CD4-positive, alpha-beta T cell (primary cell): ENCODE measurements at regions of chr22 and their contacts with region 1.

Region 1: GRCh38 chr22:40044102-40044869 is 49.5 kb downstream of the FAM83F start:
- DNase-seq: peak; percentile 96 to 100 (median 98)
- ATAC-seq: peak; percentile 86
- H3K4me3 ChIP-seq: peak overlapping the region; percentile 67
- H3K4me3 Mint-ChIP-seq: peak overlapping the region; percentile 97
- H3K27ac ChIP-seq: peak overlapping the region; percentile 97 to 100
- H3K27ac Mint-ChIP-seq: peak overlapping the region; percentile 98
- H3K4me1 ChIP-seq: peaks cover 43% of the 10 kb centered on the region
- H3K4me1 Mint-ChIP-seq: peaks cover 45% of the 10 kb centered on the region
- H3K27me3 ChIP-seq: peaks cover 0 to 4% of the 10 kb centered on the region in 2 experiments
- H3K27me3 Mint-ChIP-seq: peaks cover 7% of the 10 kb centered on the region
- CTCF ChIP-seq: no peak

Region 2: DNA sequence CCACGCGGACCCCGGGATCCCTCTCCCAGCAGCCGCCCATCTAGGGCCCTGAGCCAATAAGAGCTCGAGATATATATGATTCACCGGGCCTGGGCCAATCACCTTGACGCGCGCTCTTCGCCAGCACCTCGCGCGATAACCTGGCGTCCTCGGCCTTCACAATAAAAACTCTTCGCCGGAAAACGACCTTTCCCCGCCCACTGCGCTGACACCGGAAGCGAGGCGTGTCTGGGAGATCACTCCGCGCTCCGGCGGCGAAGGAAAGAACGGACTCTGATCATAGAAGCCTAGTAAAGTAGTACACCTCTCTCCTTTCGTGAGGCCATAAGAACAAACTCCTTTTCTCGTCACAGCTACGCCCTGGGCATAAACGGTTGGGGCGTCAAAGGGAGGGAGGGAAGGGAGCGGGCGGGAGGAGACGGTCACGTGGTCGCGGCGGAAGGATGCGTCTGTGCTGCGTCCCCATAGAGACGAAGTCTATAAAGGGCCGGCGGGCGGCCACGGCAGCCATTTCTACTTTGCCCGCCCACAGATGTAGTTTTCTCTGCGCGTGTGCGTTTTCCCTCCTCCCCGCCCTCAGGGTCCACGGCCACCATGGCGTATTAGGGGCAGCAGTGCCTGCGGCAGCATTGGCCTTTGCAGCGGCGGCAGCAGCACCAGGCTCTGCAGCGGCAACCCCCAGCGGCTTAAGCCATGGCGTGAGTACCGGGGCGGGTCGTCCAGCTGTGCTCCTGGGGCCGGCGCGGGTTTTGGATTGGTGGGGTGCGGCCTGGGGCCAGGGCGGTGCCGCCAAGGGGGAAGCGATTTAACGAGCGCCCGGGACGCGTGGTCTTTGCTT is 524.0 kb before region 1 on chr22 and contains the start of gene ATF4:
- CTCF ChIA-PET with region 1: no interaction called
- POLR2A ChIA-PET with region 1: interaction called, 36 read pairs
- intact Hi-C with region 1: no loop called
- DNase-seq: peak; percentile 93 to 99 (median 94)
- ATAC-seq: peak; percentile 91
- H3K4me3 ChIP-seq: peak within 1 kb of the TSS; percentile 100
- H3K4me3 Mint-ChIP-seq: peak within 1 kb of the TSS; percentile 97
- H3K27ac ChIP-seq: peak within 1 kb of the TSS; percentile 92 to 95
- H3K27ac Mint-ChIP-seq: peak within 1 kb of the TSS; percentile 98
- H3K4me1 ChIP-seq: peaks cover 52% of the 10 kb centered on the region
- H3K4me1 Mint-ChIP-seq: peaks cover 57% of the 10 kb centered on the region
- H3K27me3 ChIP-seq: no peaks in the 10 kb centered on the region
- H3K27me3 Mint-ChIP-seq: peaks cover 5% of the 10 kb centered on the region
- CTCF ChIP-seq: no peak
- total RNA-seq, gene ATF4: 358 to 365 TPM

Region 3: DNA sequence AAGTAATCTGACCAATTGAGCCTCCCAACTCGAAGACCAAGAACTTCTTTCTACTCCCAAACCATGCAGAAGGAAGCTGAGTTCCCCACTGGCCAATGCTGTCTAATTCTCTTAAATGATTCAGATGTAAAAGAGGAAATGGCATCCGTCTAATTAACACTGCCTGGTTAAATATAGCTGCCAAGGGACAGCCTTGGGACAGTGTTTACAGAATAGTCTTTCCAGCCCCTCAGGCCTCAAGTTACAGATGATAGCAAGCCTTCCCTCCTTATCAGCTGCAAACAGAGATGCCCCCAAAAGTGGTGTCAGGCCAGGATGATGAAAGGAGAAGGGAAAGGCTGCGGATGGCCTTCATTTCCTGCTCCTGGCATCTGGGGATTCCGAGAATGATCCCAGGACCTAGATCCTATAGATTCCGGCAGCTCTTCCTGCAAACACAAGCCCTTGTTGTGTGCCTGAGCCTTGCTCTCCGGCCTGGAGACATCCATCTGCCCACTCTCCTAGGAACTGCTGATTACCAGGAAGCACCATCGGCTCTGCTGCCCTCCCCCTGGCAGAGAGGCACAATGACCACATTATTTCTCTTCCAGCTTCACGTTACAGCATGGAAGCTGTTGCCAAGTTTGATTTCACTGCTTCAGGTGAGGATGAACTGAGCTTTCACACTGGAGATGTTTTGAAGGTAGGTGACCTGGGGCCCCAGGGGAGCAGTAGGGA is 97.6 kb before region 1 on chr22:
- CTCF ChIA-PET with region 1: no interaction called
- POLR2A ChIA-PET with region 1: interaction called, 12 read pairs
- intact Hi-C with region 1: no loop called
- DNase-seq: no peak
- ATAC-seq: no peak
- H3K4me3 ChIP-seq: no peak overlapping the region
- H3K4me3 Mint-ChIP-seq: peak overlapping the region; percentile 69
- H3K27ac ChIP-seq: peak overlapping the region; percentile 26 to 37
- H3K27ac Mint-ChIP-seq: no peak overlapping the region
- H3K4me1 ChIP-seq: peaks cover 94% of the 10 kb centered on the region
- H3K4me1 Mint-ChIP-seq: peaks cover 99% of the 10 kb centered on the region
- H3K27me3 ChIP-seq: no peaks in the 10 kb centered on the region
- H3K27me3 Mint-ChIP-seq: no peaks in the 10 kb centered on the region
- CTCF ChIP-seq: no peak

Region 4: DNA sequence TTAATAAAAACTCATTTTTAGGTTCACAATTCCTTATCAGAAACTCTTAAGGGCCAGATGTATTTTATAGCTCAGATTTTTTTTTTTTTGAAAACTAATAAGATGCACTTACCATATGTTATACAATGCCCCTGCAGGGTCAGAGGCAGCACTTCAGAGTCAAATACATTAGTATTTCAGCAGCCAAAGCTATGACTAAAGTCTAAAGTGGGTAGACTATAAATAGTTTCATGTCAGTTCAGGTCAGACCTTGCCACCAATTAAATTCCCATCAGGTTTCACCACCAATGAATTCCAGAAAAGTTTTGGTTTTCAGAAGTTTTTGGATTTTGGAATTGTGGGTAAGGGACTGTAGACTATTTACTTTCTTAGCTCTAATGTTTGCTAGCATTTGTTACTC is 26.4 kb after region 1 on chr22:
- CTCF ChIA-PET with region 1: no interaction called
- POLR2A ChIA-PET with region 1: interaction called, 13 read pairs
- intact Hi-C with region 1: no loop called
- DNase-seq: no peak
- ATAC-seq: no peak
- H3K4me3 ChIP-seq: no peak overlapping the region
- H3K4me3 Mint-ChIP-seq: peak overlapping the region; percentile 0
- H3K27ac ChIP-seq: no peak overlapping the region
- H3K27ac Mint-ChIP-seq: no peak overlapping the region
- H3K4me1 ChIP-seq: peaks cover 36% of the 10 kb centered on the region
- H3K4me1 Mint-ChIP-seq: peaks cover 83% of the 10 kb centered on the region
- H3K27me3 ChIP-seq: no peaks in the 10 kb centered on the region
- H3K27me3 Mint-ChIP-seq: no peaks in the 10 kb centered on the region
- CTCF ChIP-seq: no peak

Region 5: DNA sequence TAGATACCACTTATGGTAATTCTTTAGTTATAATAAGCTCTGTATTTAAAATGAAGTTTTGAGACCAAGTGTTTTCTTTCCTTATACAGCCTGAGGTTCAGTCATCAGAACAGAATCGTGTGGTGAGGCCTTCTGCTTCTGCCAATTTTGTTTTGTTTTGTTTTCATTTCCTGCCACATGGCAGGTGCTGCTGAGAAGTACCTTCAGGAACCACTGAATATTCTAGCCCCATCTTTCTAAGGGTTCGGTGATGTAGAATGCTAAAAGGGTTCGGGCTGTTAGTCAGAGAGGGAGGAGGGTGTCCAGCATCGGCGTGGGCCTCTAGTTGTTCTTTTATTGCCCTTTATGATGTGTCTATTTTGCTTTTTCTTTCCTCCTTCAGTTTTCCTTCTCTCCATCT is 159.3 kb after region 1 on chr22:
- CTCF ChIA-PET with region 1: no interaction called
- POLR2A ChIA-PET with region 1: interaction called, 13 read pairs
- intact Hi-C with region 1: no loop called
- DNase-seq: peak in 8 of 14 experiments; percentile 25 to 71 (median 46)
- ATAC-seq: peak; percentile 96
- H3K4me3 ChIP-seq: no peak overlapping the region
- H3K4me3 Mint-ChIP-seq: peak overlapping the region; percentile 57
- H3K27ac ChIP-seq: peak overlapping the region; percentile 45 to 48
- H3K27ac Mint-ChIP-seq: peak overlapping the region; percentile 91
- H3K4me1 ChIP-seq: peaks cover 29% of the 10 kb centered on the region
- H3K4me1 Mint-ChIP-seq: peaks cover 86% of the 10 kb centered on the region
- H3K27me3 ChIP-seq: no peaks in the 10 kb centered on the region
- H3K27me3 Mint-ChIP-seq: no peaks in the 10 kb centered on the region
- CTCF ChIP-seq: no peak

Region 6: DNA sequence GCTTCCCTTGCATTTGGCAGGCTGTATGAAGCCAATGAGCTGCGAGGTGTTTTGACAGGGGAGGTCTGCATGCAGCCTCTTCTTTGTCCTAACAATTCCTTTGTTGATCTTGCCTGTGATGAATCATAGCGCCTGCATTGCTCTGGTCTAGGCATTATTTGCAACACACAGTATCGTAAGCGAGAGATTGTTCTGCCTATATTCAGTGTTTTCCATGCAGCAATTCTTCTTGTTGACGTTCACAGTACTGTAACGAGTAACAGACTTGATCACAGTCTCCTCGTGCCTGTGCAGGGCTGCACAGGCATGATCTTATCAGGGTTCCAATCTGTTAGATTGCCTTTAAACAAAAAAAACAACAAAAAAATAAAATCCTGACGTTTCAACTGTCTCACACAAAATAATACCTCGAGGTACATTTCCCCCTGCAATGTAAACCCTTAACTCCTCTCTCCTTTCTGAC is 288.1 kb after region 1 on chr22:
- CTCF ChIA-PET with region 1: no interaction called
- POLR2A ChIA-PET with region 1: interaction called, 32 read pairs
- intact Hi-C with region 1: no loop called
- DNase-seq: peak in 4 of 14 experiments; percentile 30 to 48 (median 40)
- ATAC-seq: peak; percentile 74
- H3K4me3 ChIP-seq: no peak overlapping the region
- H3K4me3 Mint-ChIP-seq: peak overlapping the region; percentile 78
- H3K27ac ChIP-seq: peak overlapping the region in 1 of 2 donors; percentile 3
- H3K27ac Mint-ChIP-seq: peak overlapping the region; percentile 97
- H3K4me1 ChIP-seq: peaks cover 72% of the 10 kb centered on the region
- H3K4me1 Mint-ChIP-seq: peaks cover 96% of the 10 kb centered on the region
- H3K27me3 ChIP-seq: no peaks in the 10 kb centered on the region
- H3K27me3 Mint-ChIP-seq: no peaks in the 10 kb centered on the region
- CTCF ChIP-seq: no peak